Testis (tissue), 5 donors: ENCODE measurements at regions of chr2 and their contacts with region 1.

Region 1: GRCh38 chr2:240913810-240914644 is 7.9 kb downstream of the CROCC2 start:
- DNase-seq: peak; percentile 82
- H3K4me3 ChIP-seq: no peak overlapping the region
- H3K27ac ChIP-seq: peak overlapping the region in 1 of 2 donors; percentile 56
- H3K4me1 ChIP-seq: peaks cover 25% of the 10 kb centered on the region
- H3K27me3 ChIP-seq: no peaks in the 10 kb centered on the region
- CTCF ChIP-seq: peak; percentile 33 to 95 (median 81)
- POLR2A ChIP-seq: no peak

Region 2: GRCh38 chr2:240685771-240686371 is 228.2 kb before region 1 on chr2:
- intact Hi-C with region 1: no loop called
- DNase-seq: no peak
- H3K4me3 ChIP-seq: no peak overlapping the region
- H3K27ac ChIP-seq: no peak overlapping the region
- H3K4me1 ChIP-seq: no peaks in the 10 kb centered on the region
- H3K27me3 ChIP-seq: no peaks in the 10 kb centered on the region
- CTCF ChIP-seq: no peak
- POLR2A ChIP-seq: no peak

Region 3: DNA sequence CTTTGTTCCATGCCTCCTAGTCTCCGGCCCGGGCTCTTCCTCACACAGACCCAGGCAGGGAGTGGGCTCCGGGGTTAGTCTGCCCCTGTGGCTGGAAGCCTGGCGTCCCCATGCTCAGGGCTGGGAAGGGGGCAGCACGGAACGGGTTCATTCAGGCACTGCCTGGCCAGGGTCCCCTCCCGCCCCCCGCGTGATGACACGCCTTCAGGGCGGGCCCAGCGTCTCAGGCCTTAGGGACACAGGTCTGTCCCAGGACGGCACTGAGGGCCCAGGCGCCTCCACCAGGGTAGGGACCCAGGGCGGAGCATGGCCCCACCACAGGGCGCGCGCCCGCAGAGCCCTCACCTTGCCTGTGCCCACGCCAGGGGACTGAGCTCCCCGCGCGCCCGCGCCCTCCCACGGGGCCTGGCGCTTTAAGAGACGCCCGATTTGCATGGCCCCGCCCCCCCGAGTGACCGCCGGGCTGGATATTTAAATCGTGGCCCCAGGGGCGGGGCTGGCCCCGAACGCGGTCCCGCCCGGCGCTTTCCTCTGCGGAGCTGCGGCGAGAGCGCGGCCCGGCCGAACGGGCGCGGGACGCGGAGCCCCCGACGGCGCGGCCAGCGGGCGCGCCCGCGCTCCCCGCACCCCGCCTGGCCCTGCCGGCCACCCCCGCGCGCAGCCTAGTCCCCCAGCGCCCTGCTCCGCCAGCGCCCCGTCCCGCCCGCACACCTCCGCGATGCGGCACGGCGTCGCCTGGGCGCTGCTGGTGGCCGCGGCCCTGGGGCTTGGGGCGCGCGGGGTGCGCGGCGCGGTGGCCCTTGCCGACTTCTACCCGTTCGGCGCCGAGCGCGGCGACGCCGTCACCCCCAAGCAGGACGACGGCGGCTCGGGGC is 84.3 kb after region 1 on chr2 and contains the start of gene SNED1:
- intact Hi-C with region 1: loop called (anchors 10 kb)
- DNase-seq: peak; percentile 95
- H3K4me3 ChIP-seq: peak within 1 kb of the TSS; percentile 72 to 74
- H3K27ac ChIP-seq: peak within 1 kb of the TSS; percentile 85 to 89
- H3K4me1 ChIP-seq: peaks cover 57% of the 10 kb centered on the region
- H3K27me3 ChIP-seq: no peaks in the 10 kb centered on the region
- CTCF ChIP-seq: no peak
- POLR2A ChIP-seq: peak; percentile 47
- total RNA-seq, gene SNED1: 82.7 to 107 TPM

Region 4: GRCh38 chr2:241195506-241196130 is 281.6 kb after region 1 on chr2:
- intact Hi-C with region 1: no loop called
- DNase-seq: no peak
- H3K4me3 ChIP-seq: no peak overlapping the region
- H3K27ac ChIP-seq: no peak overlapping the region
- H3K4me1 ChIP-seq: no peaks in the 10 kb centered on the region
- H3K27me3 ChIP-seq: no peaks in the 10 kb centered on the region
- CTCF ChIP-seq: no peak
- POLR2A ChIP-seq: no peak